Thyroid gland (tissue), 4 donors: ENCODE measurements at regions of chr7 and their contacts with region 1.

Region 1: GRCh38 chr7:39948956-39949928 is 814 bp upstream of the CDK13 start:
- DNase-seq: peak; percentile 99
- H3K4me3 ChIP-seq: peak overlapping the region; percentile 55 to 94 (median 84)
- H3K27ac ChIP-seq: peak overlapping the region; percentile 99
- H3K4me1 ChIP-seq: peaks cover 13 to 19% of the 10 kb centered on the region in 2 donors
- H3K27me3 ChIP-seq: no peaks in the 10 kb centered on the region
- CTCF ChIP-seq: peak in 1 of 6 experiments; percentile 21
- POLR2A ChIP-seq: peak; percentile 22 to 95

Region 2: GRCh38 chr7:39894904-39895303 is 54.3 kb before region 1 on chr7:
- intact Hi-C with region 1: loop called (anchors 5 kb)
- DNase-seq: no peak
- H3K4me3 ChIP-seq: no peak overlapping the region
- H3K27ac ChIP-seq: no peak overlapping the region
- H3K4me1 ChIP-seq: no peaks in the 10 kb centered on the region
- H3K27me3 ChIP-seq: no peaks in the 10 kb centered on the region
- CTCF ChIP-seq: no peak
- POLR2A ChIP-seq: no peak

Region 3: GRCh38 chr7:40057292-40057691 is 108.0 kb after region 1 on chr7:
- intact Hi-C with region 1: loop called (anchors 5 kb)
- DNase-seq: peak; percentile 65 to 70
- H3K4me3 ChIP-seq: no peak overlapping the region
- H3K27ac ChIP-seq: no peak overlapping the region
- H3K4me1 ChIP-seq: peaks cover 9 to 17% of the 10 kb centered on the region in 2 donors
- H3K27me3 ChIP-seq: no peaks in the 10 kb centered on the region
- CTCF ChIP-seq: no peak
- POLR2A ChIP-seq: no peak

Region 4: DNA sequence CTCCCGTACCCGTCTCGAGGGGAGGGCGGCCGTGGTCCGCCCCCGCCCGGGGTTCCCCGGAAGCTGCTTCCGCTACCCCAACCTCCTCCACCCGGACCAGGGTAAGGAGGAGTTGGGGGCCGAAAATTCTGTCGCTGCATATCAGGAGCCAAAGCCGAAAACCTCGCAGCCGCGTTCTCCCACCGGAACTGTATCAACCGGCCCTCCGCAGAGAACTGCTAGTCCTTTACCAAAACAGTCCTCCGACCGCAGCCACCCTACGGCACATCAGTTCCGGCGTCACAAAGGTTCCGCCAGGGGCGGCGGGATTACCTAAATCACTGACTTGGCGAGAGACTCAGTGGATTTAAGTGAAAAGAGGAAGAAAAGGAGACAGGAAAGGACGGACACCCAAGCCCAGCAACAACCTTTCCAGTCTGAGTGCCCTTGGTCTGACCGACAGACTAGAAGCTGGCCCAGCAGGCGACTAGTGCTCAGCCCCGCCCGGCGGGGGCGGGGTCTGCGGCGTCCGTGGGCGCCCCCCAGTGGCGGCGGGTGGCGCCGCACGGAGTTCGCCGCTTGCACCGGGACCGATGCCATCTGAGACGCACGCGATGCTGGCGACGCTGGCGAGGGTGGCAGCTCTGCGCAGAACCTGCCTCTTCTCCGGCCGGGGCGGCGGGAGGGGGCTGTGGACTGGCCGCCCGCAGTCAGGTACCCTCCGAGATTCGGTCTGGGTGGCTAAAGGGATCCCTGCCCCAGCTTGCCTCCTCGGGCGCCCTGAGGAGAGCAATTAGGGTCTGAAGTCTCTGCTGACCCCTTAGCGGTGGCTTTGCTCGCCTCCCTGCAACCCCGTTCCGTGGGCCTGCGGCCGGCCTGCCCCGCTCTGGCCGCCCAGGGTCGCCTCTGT is 185.4 kb after region 1 on chr7 and contains the starts of genes MPLKIP and SUGCT:
- intact Hi-C with region 1: loop called (anchors 10 kb)
- DNase-seq: peak; percentile 84 to 85
- H3K4me3 ChIP-seq: peak within 1 kb of the TSS; percentile 64 to 94 (median 93)
- H3K27ac ChIP-seq: peak within 1 kb of the TSS; percentile 73 to 90 (median 86)
- H3K4me1 ChIP-seq: peaks cover 18 to 21% of the 10 kb centered on the region in 2 donors
- H3K27me3 ChIP-seq: no peaks in the 10 kb centered on the region
- CTCF ChIP-seq: peak; percentile 93 to 100 (median 97)
- POLR2A ChIP-seq: peak in 1 of 2 donors; percentile 70
- total RNA-seq, gene MPLKIP: 22.0 to 92.4 (median 42.9) TPM
- total RNA-seq, gene SUGCT: 1.3 to 15.2 (median 3.2) TPM